ENCODE measurements at regions of chr14 and their contacts with region 1.

Region 1: DNA sequence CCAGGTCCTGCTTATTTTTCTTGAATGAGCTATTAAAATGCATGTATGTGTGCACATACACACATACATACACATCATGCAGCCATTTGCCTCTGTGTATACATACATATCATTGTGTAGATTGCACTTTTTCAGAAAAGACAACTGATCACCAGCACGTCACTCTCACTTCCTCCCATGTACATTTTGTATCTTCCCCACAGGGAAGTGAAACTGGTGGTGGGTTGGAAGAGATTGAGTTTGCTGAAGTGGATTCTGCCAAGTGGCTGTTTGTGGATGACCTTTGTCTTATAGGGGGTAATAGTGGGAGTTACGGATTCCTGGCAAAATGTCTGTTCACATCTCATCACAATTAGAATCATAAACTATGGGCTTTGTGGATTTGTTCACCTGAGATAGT is 448.6 kb downstream of the RAD51B start:
- H3K4me3 Mint-ChIP-seq: no peak overlapping the region
- H3K27ac Mint-ChIP-seq: peak overlapping the region; percentile 95
- H3K4me1 Mint-ChIP-seq: peaks cover 62% of the 10 kb centered on the region
- H3K27me3 Mint-ChIP-seq: no peaks in the 10 kb centered on the region

Region 2: DNA sequence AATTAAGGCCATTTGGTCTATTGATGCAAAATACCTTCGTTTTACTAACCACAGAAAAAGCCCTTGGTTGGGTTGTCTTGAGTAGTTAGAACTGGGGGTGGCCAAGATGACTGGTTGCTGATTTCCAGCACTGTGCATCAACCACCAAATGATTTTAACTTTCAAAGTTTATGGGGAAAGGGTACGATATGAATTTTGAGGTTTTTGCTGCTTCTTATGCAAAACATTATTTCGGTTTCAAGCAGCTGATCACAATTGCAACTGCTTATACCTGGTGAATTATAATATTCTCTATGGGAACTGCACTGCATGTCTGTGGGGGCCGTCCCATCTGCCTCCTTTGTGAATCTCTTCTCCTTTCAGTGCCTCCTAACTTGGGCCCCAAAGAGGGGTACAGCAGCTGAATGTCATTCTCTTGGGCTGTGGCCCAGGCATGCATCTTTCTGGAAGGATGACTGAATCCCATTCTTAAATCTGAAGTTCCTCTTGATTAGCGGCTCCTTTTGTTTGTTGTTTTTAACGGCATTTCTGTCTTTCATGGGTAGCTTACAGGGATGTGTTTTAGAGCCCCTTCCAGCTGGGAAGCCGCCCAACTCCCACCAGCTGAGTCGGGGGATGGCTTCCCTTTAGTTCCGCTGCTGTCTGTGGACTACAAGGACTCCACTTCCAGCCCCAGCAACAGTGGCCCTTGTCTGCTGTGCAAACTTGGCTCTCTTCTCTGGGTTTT is 44.9 kb after region 1 on chr14:
- intact Hi-C with region 1: no loop called
- H3K4me3 Mint-ChIP-seq: no peak overlapping the region
- H3K27ac Mint-ChIP-seq: no peak overlapping the region
- H3K4me1 Mint-ChIP-seq: peaks cover 45% of the 10 kb centered on the region
- H3K27me3 Mint-ChIP-seq: no peaks in the 10 kb centered on the region

Region 3: DNA sequence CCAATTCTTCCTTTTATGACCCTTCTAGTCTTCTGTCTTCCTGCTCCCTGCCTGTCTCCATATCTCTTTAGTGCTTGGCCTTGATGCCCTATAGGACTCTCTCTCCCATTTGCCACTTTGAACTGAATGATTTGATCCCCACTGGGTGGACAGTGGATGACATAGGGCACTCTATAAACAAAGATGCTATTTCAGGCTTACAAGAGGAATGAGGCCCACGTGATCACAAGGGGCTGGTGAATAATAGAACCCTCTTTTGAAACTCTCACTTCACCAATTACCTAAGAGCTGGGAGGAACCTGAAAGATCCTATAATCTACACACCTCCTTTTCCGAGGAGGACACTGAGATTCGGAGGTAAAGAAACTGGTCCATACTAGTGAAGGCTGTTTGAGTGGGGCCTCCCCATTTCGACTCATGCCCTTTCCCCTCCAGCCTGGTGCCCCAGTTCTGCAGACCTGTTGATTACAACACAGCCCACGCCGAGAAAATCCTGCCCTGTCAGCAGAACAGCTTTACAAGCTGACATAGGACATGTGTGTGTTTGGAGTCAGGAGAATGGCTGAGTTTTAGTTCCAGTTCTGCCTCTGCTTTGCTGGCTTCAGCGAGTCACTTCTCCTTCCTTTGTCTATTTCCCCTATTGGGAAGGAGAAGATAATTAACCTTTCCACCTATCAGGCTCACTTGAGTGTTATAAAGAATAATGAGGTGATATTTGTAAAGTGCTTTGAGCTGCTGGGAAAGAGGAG is 124.4 kb after region 1 on chr14:
- intact Hi-C with region 1: loop called (anchors 5 kb)
- H3K4me3 Mint-ChIP-seq: peak overlapping the region; percentile 21
- H3K27ac Mint-ChIP-seq: peak overlapping the region; percentile 95
- H3K4me1 Mint-ChIP-seq: peaks cover 72% of the 10 kb centered on the region
- H3K27me3 Mint-ChIP-seq: no peaks in the 10 kb centered on the region

Measured in dendritic cell treated with granulocyte-macrophage colony-stimulating factor and Interleukin-4, amounts not matched to agents 40 ng/mL and 50 ng/mL, for 4 days (primary cell).